ENCODE measurements at regions of chr12 and their contacts with region 1.

Region 1: GRCh38 chr12:53220801-53221202 is 11.2 kb downstream of the RARG start:
- DNase-seq: peak; percentile 84
- H3K4me3 Mint-ChIP-seq: peak overlapping the region; percentile 96
- H3K27ac Mint-ChIP-seq: peak overlapping the region; percentile 99
- H3K4me1 Mint-ChIP-seq: peaks cover 71% of the 10 kb centered on the region
- H3K27me3 Mint-ChIP-seq: no peaks in the 10 kb centered on the region

Region 2: DNA sequence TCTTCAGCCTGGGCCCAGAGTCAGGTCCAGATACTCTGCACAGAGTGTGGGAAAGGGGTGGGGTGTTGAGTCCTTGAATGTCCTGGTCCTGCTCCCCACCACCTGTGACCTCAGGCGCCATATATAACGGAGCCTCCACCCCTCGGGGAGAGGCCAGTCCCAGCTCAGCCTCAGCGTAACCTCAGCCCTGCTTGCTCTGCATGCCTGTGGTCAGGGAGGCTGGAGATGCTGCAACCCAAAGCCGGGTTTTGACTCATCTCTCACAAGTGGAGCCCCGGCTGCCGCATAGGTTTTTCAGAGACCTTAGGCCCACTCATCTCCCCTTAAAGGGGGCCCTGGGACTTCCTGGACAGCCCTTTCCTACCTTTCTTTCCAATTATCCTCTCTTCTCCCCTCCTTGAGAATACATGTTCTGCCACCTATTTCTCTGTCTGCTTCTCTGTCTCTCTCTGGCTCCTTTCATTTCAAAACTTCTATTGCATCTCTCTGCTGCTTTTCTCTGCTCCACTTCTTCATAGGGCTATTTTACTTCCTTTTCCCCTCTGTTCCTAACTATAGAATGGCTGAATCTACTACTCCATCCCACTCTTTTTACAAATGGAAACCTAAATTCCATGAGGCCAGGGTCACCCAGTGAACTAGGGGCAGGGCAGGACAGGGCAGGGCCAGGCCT is 14.9 kb before region 1 on chr12:
- intact Hi-C with region 1: loop called (anchors 1 kb)
- DNase-seq: peak; percentile 75
- H3K4me3 Mint-ChIP-seq: peak overlapping the region; percentile 82
- H3K27ac Mint-ChIP-seq: peak overlapping the region; percentile 66
- H3K4me1 Mint-ChIP-seq: peaks cover 56% of the 10 kb centered on the region
- H3K27me3 Mint-ChIP-seq: no peaks in the 10 kb centered on the region

Region 3: DNA sequence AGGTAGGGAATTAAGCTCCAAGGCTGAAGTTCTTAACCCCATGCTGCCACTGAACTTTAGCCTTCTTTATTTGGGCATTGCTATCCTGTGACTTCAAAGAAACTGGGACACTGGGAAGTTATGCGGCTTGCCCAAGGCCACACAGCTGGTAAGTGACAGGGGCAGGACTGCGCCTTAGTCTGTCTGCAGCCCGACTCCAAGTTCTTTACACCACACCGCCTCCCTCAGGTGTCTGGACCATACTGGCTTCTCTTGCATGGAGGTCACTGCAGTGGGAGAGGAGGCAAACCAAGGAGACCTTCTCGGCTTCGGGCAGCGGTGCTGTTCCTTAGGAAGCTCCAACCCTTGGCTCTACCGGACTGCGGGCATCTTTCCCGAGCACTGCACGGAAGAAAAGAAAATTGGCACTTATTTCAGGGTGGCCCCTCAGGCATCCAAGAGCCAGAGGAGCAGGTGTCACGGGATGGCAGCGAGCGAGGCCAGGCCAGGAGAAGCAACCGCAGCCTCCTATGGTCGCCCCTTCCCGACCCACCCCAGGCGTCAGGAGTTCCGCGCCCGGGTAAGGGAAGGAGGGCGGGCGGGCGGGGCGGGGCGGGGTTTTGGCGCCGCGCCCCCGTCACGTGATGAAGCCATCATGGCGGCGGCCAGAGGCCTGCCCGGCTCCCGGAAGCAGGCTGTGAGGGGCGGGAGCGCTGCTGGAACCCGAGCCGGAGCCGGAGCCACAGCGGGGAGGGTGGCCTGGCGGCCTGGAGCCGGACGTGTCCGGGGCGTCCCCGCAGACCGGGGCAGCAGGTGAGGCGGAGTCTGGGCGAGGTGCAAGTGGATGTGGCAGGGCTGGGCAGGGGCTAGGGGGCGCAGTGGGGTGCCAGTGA is 30.9 kb after region 1 on chr12:
- intact Hi-C with region 1: loop called (anchors 2 kb)
- DNase-seq: peak; percentile 70
- H3K4me3 Mint-ChIP-seq: peak overlapping the region; percentile 94
- H3K27ac Mint-ChIP-seq: peak overlapping the region; percentile 86
- H3K4me1 Mint-ChIP-seq: peaks cover 37% of the 10 kb centered on the region
- H3K27me3 Mint-ChIP-seq: peaks cover 2% of the 10 kb centered on the region

Region 4: GRCh38 chr12:53295070-53295890 is 74.5 kb after region 1 on chr12 and contains the start of gene PFDN5:
- intact Hi-C with region 1: loop called (anchors 2 kb)
- DNase-seq: peak; percentile 86
- H3K4me3 Mint-ChIP-seq: peak within 1 kb of the TSS; percentile 98
- H3K27ac Mint-ChIP-seq: peak within 1 kb of the TSS; percentile 92
- H3K4me1 Mint-ChIP-seq: peaks cover 40% of the 10 kb centered on the region
- H3K27me3 Mint-ChIP-seq: no peaks in the 10 kb centered on the region
- total RNA-seq, gene PFDN5: 321 and 326 TPM in 2 replicates

Measured in activated T-helper 2 cell treated with anti-CD3 and anti-CD28 coated beads, Interferon-gamma antibody, Interleukin-2, Interleukin-4, amounts not matched to agents 10 μg/mL and 5 μg/mL and 100 μg/mL, durations not matched to agents 14 hours and 24 hours and 36 hours (primary cell).